Thyroid gland (tissue), 4 donors: ENCODE measurements at regions of chr6 and their contacts with region 1.

Region 1: GRCh38 chr6:49531774-49532569 is 18.5 kb upstream of the C6orf141 start:
- DNase-seq: no peak
- H3K4me3 ChIP-seq: no peak overlapping the region
- H3K27ac ChIP-seq: no peak overlapping the region
- H3K4me1 ChIP-seq: no peaks in the 10 kb centered on the region
- H3K27me3 ChIP-seq: no peaks in the 10 kb centered on the region
- CTCF ChIP-seq: peak; percentile 18 to 82 (median 46)
- POLR2A ChIP-seq: no peak

Region 2: GRCh38 chr6:49366539-49366938 is 165.4 kb before region 1 on chr6:
- intact Hi-C with region 1: no loop called
- DNase-seq: no peak
- H3K4me3 ChIP-seq: no peak overlapping the region
- H3K27ac ChIP-seq: no peak overlapping the region
- H3K4me1 ChIP-seq: no peaks in the 10 kb centered on the region
- H3K27me3 ChIP-seq: no peaks in the 10 kb centered on the region
- CTCF ChIP-seq: no peak
- POLR2A ChIP-seq: no peak

Region 3: DNA sequence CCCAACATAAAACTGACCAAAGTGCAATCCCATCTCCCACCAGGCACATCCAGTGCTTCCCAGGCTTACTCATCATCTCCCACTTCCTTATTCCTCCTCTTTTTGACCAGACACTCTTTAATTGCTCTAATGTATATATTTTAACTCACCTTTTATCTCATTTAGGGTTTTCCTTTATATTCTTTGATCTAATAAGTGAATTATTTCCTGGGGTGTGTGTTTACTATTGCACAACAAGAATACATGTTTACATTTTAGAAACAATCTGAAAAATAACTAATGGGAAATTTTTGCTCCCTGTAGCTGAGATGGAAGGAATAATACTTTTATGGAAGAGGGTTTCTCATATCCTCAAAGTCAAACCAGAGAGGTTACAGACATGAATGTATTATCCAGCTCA is 86.3 kb after region 1 on chr6:
- intact Hi-C with region 1: loop called (anchors 10 kb)
- DNase-seq: no peak
- H3K4me3 ChIP-seq: no peak overlapping the region
- H3K27ac ChIP-seq: no peak overlapping the region
- H3K4me1 ChIP-seq: no peaks in the 10 kb centered on the region
- H3K27me3 ChIP-seq: no peaks in the 10 kb centered on the region
- CTCF ChIP-seq: no peak
- POLR2A ChIP-seq: no peak

Region 4: GRCh38 chr6:49856282-49856681 is 324.3 kb after region 1 on chr6:
- intact Hi-C with region 1: loop called (anchors 10 kb)
- DNase-seq: no peak
- H3K4me3 ChIP-seq: no peak overlapping the region
- H3K27ac ChIP-seq: no peak overlapping the region
- H3K4me1 ChIP-seq: no peaks in the 10 kb centered on the region
- H3K27me3 ChIP-seq: no peaks in the 10 kb centered on the region
- CTCF ChIP-seq: no peak
- POLR2A ChIP-seq: no peak